ENCODE measurements at regions of chr3 and their contacts with region 1.

Region 1: DNA sequence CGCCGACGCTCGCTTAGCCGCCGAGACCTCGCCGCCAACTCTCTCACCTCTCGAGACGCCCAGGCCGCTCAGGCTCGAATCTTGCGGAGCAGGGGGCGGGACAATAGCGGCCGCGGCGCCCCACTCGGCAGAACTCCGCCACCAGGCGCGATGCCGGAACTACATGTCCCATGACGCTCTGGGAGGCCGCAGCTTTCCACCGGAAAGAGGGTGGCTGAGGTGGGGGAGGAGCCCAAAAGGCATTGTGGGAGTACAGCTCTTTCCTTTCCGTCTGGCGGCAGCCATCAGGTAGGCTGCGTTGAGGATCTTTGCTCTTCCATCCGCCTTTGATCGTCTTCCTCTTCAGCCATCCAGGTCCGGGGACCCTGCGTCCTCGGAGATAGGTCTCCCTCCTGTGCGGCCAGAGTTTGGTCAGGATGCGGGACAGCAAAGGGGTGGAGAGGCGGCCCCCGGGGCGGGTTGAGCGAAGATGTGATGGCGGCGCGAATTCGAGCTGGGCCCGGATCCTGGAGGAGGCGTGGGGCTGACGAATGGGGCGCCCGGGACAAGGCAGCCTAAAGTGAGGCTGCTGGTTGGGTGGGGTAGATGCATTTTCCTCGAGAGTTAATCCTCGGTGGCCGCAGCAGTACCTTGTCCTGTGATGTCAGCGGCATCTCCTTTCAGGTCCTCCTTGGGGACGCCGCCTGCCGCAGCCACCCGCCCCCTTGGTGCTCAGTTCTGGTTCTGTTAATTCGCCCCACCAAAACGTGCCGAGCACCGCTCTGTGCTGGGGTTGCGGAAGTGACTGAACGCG is at the starts of genes NKIRAS1 and RPL15:
- DNase-seq: peak; percentile 92 to 93
- H3K4me3 ChIP-seq: peak within 1 kb of the TSS; percentile 86 to 99 (median 92)
- H3K27ac ChIP-seq: peak within 1 kb of the TSS; percentile 96
- H3K4me1 ChIP-seq: peaks cover 5 to 8% (median 6%) of the 10 kb centered on the region in 4 experiments; a peak in 5 of 7 replicates
- H3K27me3 ChIP-seq: no peaks in the 10 kb centered on the region; a peak in 1 of 7 replicates
- CTCF ChIP-seq: peak in 1 of 3 experiments; percentile 27; a peak in 1 of 4 replicates
- EP300 ChIP-seq: no peak; a peak in 1 of 3 replicates
- POLR2A ChIP-seq: peak; percentile 99 to 100
- RAD21 ChIP-seq: no peak
- total RNA-seq, gene NKIRAS1: 7.0 and 7.6 TPM in 2 replicates
- total RNA-seq, gene RPL15: 2,767 and 2,819 TPM in 2 replicates

Region 2: DNA sequence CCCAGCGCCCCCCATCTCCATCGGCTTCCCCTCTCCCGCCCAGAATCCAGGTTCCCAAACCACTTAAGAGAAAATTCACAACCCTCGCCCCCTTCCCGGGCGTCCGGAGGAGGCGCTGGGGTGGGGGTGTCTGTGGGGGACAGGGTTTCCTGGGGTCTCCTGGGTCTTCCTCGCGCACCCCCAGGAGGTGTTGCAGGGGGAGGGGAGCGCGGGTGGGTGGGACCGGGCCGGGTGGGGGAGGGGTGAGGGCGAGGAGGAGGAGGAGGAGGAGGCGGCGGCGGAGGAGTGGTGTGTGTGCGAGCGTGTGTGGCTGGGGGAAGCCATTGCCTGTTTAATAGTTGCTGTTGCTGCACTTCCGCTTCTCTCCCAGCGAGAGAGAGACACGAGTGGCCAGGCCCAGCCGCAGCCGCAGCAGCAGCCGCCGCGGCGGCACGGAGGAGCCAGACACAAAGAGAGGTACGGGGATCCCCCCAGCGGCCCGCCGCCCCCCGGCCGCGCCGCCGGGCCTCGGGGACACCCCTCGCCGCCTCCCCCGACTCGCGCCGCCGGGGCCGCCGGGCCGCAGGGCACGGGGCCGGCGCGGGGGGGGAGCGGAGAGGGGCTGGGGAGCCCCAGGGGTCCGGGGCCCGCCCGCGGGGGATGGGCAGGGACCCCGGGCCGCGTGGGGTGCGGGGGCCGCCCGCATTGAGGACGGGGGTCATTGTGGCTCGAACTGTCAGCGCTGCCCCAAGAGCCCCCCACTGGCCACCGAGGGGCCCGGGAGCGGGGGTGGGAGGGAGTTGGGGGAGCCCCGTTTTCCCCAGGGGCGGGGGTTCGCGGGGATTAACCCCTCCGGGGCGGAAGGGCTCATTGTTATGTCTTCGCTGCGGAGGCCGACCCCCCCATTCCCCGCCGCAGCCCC is 111.2 kb before region 1 on chr3 and contains the start of gene UBE2E1:
- CTCF ChIA-PET with region 1: no interaction called
- POLR2A ChIA-PET with region 1: interaction called, 69 read pairs
- DNase-seq: peak in 1 of 2 experiments; percentile 70
- H3K4me3 ChIP-seq: peak within 1 kb of the TSS; percentile 60 to 87 (median 73)
- H3K27ac ChIP-seq: peak within 1 kb of the TSS; percentile 68; the same call in 1 of the 2 replicates
- H3K4me1 ChIP-seq: peaks cover 0 to 17% (median 10%) of the 10 kb centered on the region in 4 experiments; a peak in 5 of 7 replicates
- H3K27me3 ChIP-seq: no peaks in the 10 kb centered on the region
- CTCF ChIP-seq: no peak
- EP300 ChIP-seq: no peak
- POLR2A ChIP-seq: peak in 1 of 2 experiments; percentile 19; a peak in 1 of 3 replicates
- RAD21 ChIP-seq: no peak
- total RNA-seq, gene UBE2E1: 130 and 141 TPM in 2 replicates

Region 3: DNA sequence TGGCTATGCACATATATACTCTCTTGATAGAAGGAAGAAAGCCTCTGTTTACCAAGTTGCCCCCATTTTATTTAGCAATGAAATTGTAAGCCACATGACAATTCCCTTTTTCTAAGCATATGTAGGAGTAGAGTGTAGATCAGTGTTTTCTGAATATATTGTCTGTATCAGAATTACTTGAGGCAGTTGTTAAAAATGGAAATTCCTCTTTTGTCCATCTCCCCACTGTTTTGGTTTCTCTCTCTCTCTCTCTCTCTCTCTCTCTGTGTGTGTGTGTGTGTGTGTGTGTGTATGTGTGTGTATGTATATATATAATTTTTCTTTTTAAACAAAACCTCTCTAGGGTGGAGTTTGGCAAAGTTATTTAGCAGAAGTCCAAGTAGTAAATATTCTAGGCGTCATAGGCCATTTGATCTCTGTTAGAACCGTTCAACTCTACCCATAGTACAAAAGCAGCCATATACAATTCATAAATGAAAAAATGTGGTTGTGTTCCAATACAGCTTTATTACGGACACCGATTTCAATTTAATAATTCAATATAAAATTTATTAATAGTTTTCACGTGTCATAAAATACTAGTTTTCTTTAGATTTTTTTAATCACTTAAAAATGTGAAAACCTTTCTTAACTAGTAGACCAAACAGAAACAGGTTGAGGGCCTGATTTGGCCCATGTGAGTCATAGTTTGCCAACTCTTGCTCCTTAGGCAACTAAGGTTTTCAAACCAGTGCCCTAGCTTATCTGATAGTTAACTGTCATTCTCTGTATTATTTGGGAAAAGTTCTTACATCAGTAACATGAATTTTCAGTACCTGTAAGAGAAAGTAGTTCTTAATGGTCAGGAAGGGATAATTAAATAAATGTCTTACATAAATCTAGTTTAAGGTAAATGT is 71.5 kb before region 1 on chr3:
- CTCF ChIA-PET with region 1: no interaction called
- POLR2A ChIA-PET with region 1: interaction called, 21 read pairs
- DNase-seq: no peak
- H3K4me3 ChIP-seq: no peak overlapping the region
- H3K27ac ChIP-seq: no peak overlapping the region
- H3K4me1 ChIP-seq: peaks cover 0 to 1% (median 0%) of the 10 kb centered on the region in 4 experiments; a peak in 1 of 7 replicates
- H3K27me3 ChIP-seq: no peaks in the 10 kb centered on the region
- CTCF ChIP-seq: no peak
- EP300 ChIP-seq: no peak
- POLR2A ChIP-seq: no peak
- RAD21 ChIP-seq: no peak

Region 4: GRCh38 chr3:23877329-23877980 is 39.6 kb before region 1 on chr3:
- CTCF ChIA-PET with region 1: no interaction called
- POLR2A ChIA-PET with region 1: interaction called, 45 read pairs
- DNase-seq: no peak
- H3K4me3 ChIP-seq: no peak overlapping the region
- H3K27ac ChIP-seq: no peak overlapping the region
- H3K4me1 ChIP-seq: no peaks in the 10 kb centered on the region; a peak in 2 of 7 replicates
- H3K27me3 ChIP-seq: no peaks in the 10 kb centered on the region
- CTCF ChIP-seq: no peak
- EP300 ChIP-seq: no peak
- POLR2A ChIP-seq: no peak
- RAD21 ChIP-seq: no peak

Region 5: GRCh38 chr3:23945903-23946751 is 29.0 kb after region 1 on chr3:
- CTCF ChIA-PET with region 1: interaction called, 6 read pairs
- POLR2A ChIA-PET with region 1: interaction called, 363 read pairs
- DNase-seq: peak; percentile 82 to 99
- H3K4me3 ChIP-seq: peak overlapping the region; percentile 91 to 94 (median 92)
- H3K27ac ChIP-seq: peak overlapping the region; percentile 97
- H3K4me1 ChIP-seq: peaks cover 8 to 17% (median 12%) of the 10 kb centered on the region in 4 experiments; a peak in 6 of 7 replicates
- H3K27me3 ChIP-seq: no peaks in the 10 kb centered on the region; a peak in 1 of 7 replicates
- CTCF ChIP-seq: no peak
- EP300 ChIP-seq: peak in 1 of 2 experiments; percentile 73; a peak in 1 of 3 replicates
- POLR2A ChIP-seq: peak; percentile 74 to 76
- RAD21 ChIP-seq: peak in 1 of 2 experiments; percentile 0; a peak in 1 of 4 replicates

Region 6: GRCh38 chr3:24027946-24028345 is 110.9 kb after region 1 on chr3:
- CTCF ChIA-PET with region 1: no interaction called
- POLR2A ChIA-PET with region 1: no interaction called
- DNase-seq: no peak
- H3K4me3 ChIP-seq: no peak overlapping the region
- H3K27ac ChIP-seq: no peak overlapping the region
- H3K4me1 ChIP-seq: no peaks in the 10 kb centered on the region
- H3K27me3 ChIP-seq: peaks cover 0 to 1% (median 0%) of the 10 kb centered on the region in 4 experiments; a peak in 1 of 7 replicates
- CTCF ChIP-seq: no peak
- EP300 ChIP-seq: no peak
- POLR2A ChIP-seq: no peak
- RAD21 ChIP-seq: no peak

Region 7: GRCh38 chr3:24628523-24629258 is 711.6 kb after region 1 on chr3:
- CTCF ChIA-PET with region 1: no interaction called
- POLR2A ChIA-PET with region 1: no interaction called
- DNase-seq: no peak
- H3K4me3 ChIP-seq: no peak overlapping the region
- H3K27ac ChIP-seq: no peak overlapping the region
- H3K4me1 ChIP-seq: no peaks in the 10 kb centered on the region
- H3K27me3 ChIP-seq: no peaks in the 10 kb centered on the region
- CTCF ChIP-seq: no peak
- EP300 ChIP-seq: no peak
- POLR2A ChIP-seq: no peak
- RAD21 ChIP-seq: no peak

Measured in H1 (cell line).